Endothelial cell of umbilical vein (primary cell): ENCODE measurements at regions of chr3 and their contacts with region 1.

Region 1: GRCh38 chr3:192833177-192833821 is 84.4 kb downstream of the MB21D2 start:
- DNase-seq: peak; percentile 72
- H3K4me3 ChIP-seq: no peak overlapping the region
- H3K27ac ChIP-seq: no peak overlapping the region
- H3K4me1 ChIP-seq: peaks cover 11% of the 10 kb centered on the region
- H3K27me3 ChIP-seq: no peaks in the 10 kb centered on the region
- CTCF ChIP-seq: no peak
- POLR2A ChIP-seq: no peak

Region 2: GRCh38 chr3:192929755-192930547 is 96.7 kb after region 1 on chr3:
- CTCF ChIA-PET with region 1: no interaction called
- POLR2A ChIA-PET with region 1: no interaction called
- dilution Hi-C with region 1: no loop called
- intact Hi-C with region 1: no loop called
- DNase-seq: no peak
- H3K4me3 ChIP-seq: no peak overlapping the region
- H3K27ac ChIP-seq: no peak overlapping the region
- H3K4me1 ChIP-seq: no peaks in the 10 kb centered on the region
- H3K27me3 ChIP-seq: no peaks in the 10 kb centered on the region
- CTCF ChIP-seq: no peak
- POLR2A ChIP-seq: no peak

Region 3: GRCh38 chr3:193289281-193289680 is 456.0 kb after region 1 on chr3:
- CTCF ChIA-PET with region 1: no interaction called
- POLR2A ChIA-PET with region 1: interaction called, 10 read pairs
- dilution Hi-C with region 1: no loop called
- intact Hi-C with region 1: no loop called
- DNase-seq: no peak
- H3K4me3 ChIP-seq: no peak overlapping the region
- H3K27ac ChIP-seq: no peak overlapping the region
- H3K4me1 ChIP-seq: no peaks in the 10 kb centered on the region
- H3K27me3 ChIP-seq: no peaks in the 10 kb centered on the region
- CTCF ChIP-seq: no peak
- POLR2A ChIP-seq: no peak